Heart left ventricle (tissue), 16 donors: ENCODE measurements at regions of chr6 and their contacts with region 1.

Region 1: DNA sequence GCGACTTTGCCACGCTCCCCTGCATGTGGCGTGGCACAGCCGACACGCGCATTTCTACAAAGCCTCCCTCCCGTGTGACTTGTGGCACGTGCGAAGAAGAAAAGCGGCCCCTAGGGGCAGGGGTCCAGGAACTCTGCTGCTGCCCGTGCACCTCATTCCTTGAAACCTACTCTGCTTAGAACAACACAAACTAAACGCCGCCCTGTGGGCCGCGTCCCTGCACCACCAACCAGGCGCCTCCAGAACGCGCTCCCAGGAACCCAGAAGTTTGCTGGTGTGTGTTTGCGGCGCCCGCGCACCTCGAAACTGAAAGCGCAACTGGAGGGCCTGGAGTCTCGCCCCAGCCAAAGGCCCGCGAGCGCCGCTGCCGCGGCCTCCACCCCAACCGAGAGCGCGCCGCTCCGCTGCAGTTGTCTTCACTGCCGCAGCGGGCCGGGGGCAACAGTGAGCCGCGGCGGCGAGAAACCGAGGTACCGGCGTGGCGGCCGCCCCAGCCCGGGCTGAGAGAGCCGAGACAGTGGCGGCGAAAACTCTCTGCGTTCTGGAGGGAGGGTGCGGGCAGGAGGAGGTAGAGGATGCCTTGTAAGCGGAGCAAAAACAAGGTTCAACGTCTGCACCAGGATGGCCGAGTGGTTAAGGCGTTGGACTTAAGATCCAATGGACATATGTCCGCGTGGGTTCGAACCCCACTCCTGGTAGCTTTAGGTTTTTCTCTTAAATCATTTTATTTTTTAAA is 65.8 kb downstream of the STX11 start:
- DNase-seq: peak; percentile 92 to 96 (median 95)
- ATAC-seq: peak; percentile 91 to 96 (median 94)
- H3K4me3 ChIP-seq: peak overlapping the region; percentile 35 to 82 (median 71)
- H3K27ac ChIP-seq: peak overlapping the region; percentile 92 to 100 (median 96)
- H3K4me1 ChIP-seq: peaks cover 0 to 25% (median 13%) of the 10 kb centered on the region in 12 donors
- H3K27me3 ChIP-seq: no peaks in the 10 kb centered on the region
- CTCF ChIP-seq: peak; percentile 49 to 78 (median 66)
- POLR2A ChIP-seq: peak in 1 of 2 donors; percentile 44

Region 2: GRCh38 chr6:144104898-144105487 is 111.1 kb before region 1 on chr6:
- intact Hi-C with region 1: loop called (anchors 1 to 2 kb)
- DNase-seq: peak in 2 of 5 donors; percentile 21 to 36
- ATAC-seq: peak; percentile 64 to 93 (median 89)
- H3K4me3 ChIP-seq: no peak overlapping the region
- H3K27ac ChIP-seq: no peak overlapping the region
- H3K4me1 ChIP-seq: peaks cover 0 to 7% (median 0%) of the 10 kb centered on the region in 12 donors
- H3K27me3 ChIP-seq: no peaks in the 10 kb centered on the region
- CTCF ChIP-seq: peak; percentile 52 to 90 (median 75)
- POLR2A ChIP-seq: no peak

Region 3: GRCh38 chr6:144149891-144150709 is 66.0 kb before region 1 on chr6 and contains the start of gene STX11:
- intact Hi-C with region 1: loop called (anchors 1 to 5 kb)
- DNase-seq: peak; percentile 82 to 90 (median 85)
- ATAC-seq: peak; percentile 80 to 97 (median 94)
- H3K4me3 ChIP-seq: peak within 1 kb of the TSS; percentile 64 to 95 (median 78)
- H3K27ac ChIP-seq: peak within 1 kb of the TSS; percentile 10 to 97 (median 77)
- H3K4me1 ChIP-seq: peaks cover 0 to 51% (median 10%) of the 10 kb centered on the region in 12 donors
- H3K27me3 ChIP-seq: no peaks in the 10 kb centered on the region
- CTCF ChIP-seq: peak in 2 of 12 donors; percentile 21 to 46
- POLR2A ChIP-seq: peak in 1 of 2 donors; percentile 84
- total RNA-seq, gene STX11: 5.4 to 21.0 (median 9.0) TPM

Region 4: DNA sequence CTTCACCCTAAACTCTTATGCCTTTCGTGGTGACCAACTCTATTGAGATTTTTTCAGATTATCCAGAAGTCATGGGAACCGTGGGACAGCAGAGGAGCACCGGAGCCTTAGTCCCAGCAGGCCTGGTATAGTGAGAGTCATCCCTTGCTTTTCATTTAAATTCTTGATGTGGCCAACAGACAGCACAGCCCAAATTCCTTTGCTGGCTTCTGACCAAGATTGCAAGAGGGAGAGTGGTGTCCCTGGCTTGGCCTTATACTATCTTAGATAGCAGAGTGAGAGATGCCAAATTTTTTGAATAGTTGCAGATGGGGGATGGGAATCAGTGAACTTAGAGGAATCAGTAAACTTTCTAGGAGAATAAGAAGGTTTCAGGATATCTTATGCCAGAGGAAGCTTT is 58.0 kb before region 1 on chr6:
- intact Hi-C with region 1: loop called in 3 of 10 experiments (anchors 5 kb)
- DNase-seq: peak in 4 of 5 donors; percentile 58 to 71 (median 68)
- ATAC-seq: peak; percentile 89 to 93 (median 90)
- H3K4me3 ChIP-seq: no peak overlapping the region
- H3K27ac ChIP-seq: peak overlapping the region in 10 of 12 donors; percentile 28 to 84 (median 53)
- H3K4me1 ChIP-seq: peaks cover 4 to 95% (median 23%) of the 10 kb centered on the region in 12 donors
- H3K27me3 ChIP-seq: no peaks in the 10 kb centered on the region
- CTCF ChIP-seq: no peak
- POLR2A ChIP-seq: peak in 1 of 2 donors; percentile 12

Region 5: GRCh38 chr6:144265390-144265789 is 49.3 kb after region 1 on chr6:
- intact Hi-C with region 1: loop called in 4 of 10 experiments (anchors 5 to 10 kb)
- DNase-seq: no peak
- ATAC-seq: peak in 3 of 4 donors; percentile 17 to 59 (median 47)
- H3K4me3 ChIP-seq: peak overlapping the region in 1 of 12 donors; percentile 13
- H3K27ac ChIP-seq: peak overlapping the region; percentile 45 to 83 (median 68)
- H3K4me1 ChIP-seq: peaks cover 9 to 32% (median 26%) of the 10 kb centered on the region in 12 donors
- H3K27me3 ChIP-seq: no peaks in the 10 kb centered on the region
- CTCF ChIP-seq: no peak
- POLR2A ChIP-seq: no peak

Region 6: DNA sequence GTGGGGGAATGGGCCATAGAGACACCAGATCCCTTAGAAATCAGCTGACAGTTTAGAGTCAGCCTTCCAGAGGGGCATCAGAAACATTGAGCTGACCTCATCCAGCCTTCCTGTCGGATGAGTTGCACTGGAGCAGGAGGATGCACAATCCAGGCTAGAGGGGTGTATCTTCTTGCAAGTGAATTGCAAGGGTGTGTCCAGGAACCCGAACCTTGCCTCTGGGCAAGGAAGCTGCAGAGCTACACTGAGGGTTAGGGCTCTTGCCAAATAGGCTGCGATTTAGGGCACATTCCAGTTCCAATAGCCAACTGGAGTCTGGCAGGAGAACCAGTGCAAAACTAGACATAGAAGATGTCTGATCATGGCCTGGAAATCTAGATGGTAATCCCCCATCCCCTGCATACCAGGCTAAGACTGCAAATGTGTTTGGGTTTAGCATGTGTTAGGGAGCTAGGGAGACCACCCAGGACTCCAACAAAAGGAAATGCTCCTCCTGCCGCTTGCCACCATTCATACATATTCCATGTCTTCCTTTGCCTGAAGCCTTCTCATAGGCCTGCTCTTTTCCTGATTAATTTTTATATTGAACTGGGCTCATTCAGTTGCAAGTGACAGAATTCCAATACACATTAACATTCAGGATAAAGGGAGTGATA is 62.7 kb after region 1 on chr6:
- intact Hi-C with region 1: loop called in 2 of 10 experiments (anchors 5 to 10 kb)
- DNase-seq: no peak
- ATAC-seq: no peak
- H3K4me3 ChIP-seq: no peak overlapping the region
- H3K27ac ChIP-seq: no peak overlapping the region
- H3K4me1 ChIP-seq: peaks cover 0 to 6% (median 1%) of the 10 kb centered on the region in 12 donors
- H3K27me3 ChIP-seq: no peaks in the 10 kb centered on the region
- CTCF ChIP-seq: no peak
- POLR2A ChIP-seq: no peak

Region 7: GRCh38 chr6:144377586-144378210 is 161.6 kb after region 1 on chr6:
- intact Hi-C with region 1: no loop called
- DNase-seq: no peak
- ATAC-seq: peak in 3 of 4 donors; percentile 36 to 43 (median 42)
- H3K4me3 ChIP-seq: no peak overlapping the region
- H3K27ac ChIP-seq: peak overlapping the region in 1 of 12 donors; percentile 4
- H3K4me1 ChIP-seq: peaks cover 0 to 51% (median 25%) of the 10 kb centered on the region in 12 donors
- H3K27me3 ChIP-seq: no peaks in the 10 kb centered on the region
- CTCF ChIP-seq: no peak
- POLR2A ChIP-seq: no peak

Region 8: GRCh38 chr6:144482142-144482541 is 266.0 kb after region 1 on chr6:
- intact Hi-C with region 1: loop called in 9 of 10 experiments (anchors 1 to 10 kb)
- DNase-seq: peak; percentile 69 to 77 (median 72)
- ATAC-seq: peak in 2 of 4 donors; percentile 23 to 41
- H3K4me3 ChIP-seq: no peak overlapping the region
- H3K27ac ChIP-seq: no peak overlapping the region
- H3K4me1 ChIP-seq: peaks cover 0 to 38% (median 21%) of the 10 kb centered on the region in 12 donors
- H3K27me3 ChIP-seq: no peaks in the 10 kb centered on the region
- CTCF ChIP-seq: peak; percentile 50 to 80 (median 66)
- POLR2A ChIP-seq: no peak